Transverse colon (tissue), 4 donors: ENCODE measurements at regions of chr11 and their contacts with region 1.

Region 1: GRCh38 chr11:19679952-19680828 is 32.4 kb upstream of the NAV2 start:
- DNase-seq: peak; percentile 71
- H3K4me3 ChIP-seq: no peak overlapping the region
- H3K27ac ChIP-seq: peak overlapping the region; percentile 77 to 83 (median 80)
- H3K4me1 ChIP-seq: peaks cover 5 to 38% (median 11%) of the 10 kb centered on the region in 4 donors
- H3K27me3 ChIP-seq: no peaks in the 10 kb centered on the region
- CTCF ChIP-seq: peak in 1 of 5 experiments; percentile 22
- EP300 ChIP-seq: peak; percentile 83
- POLR2A ChIP-seq: no peak

Region 2: GRCh38 chr11:19712281-19713220 is 32.4 kb after region 1 on chr11 and contains the start of gene NAV2:
- in situ Hi-C with region 1: no loop called
- intact Hi-C with region 1: loop called (anchors 5 kb)
- DNase-seq: peak; percentile 91
- H3K4me3 ChIP-seq: peak within 1 kb of the TSS; percentile 48 to 77 (median 58)
- H3K27ac ChIP-seq: peak within 1 kb of the TSS; percentile 86 to 94 (median 90)
- H3K4me1 ChIP-seq: peaks cover 0 to 36% (median 23%) of the 10 kb centered on the region in 4 donors
- H3K27me3 ChIP-seq: peaks cover 33% of the 10 kb centered on the region
- CTCF ChIP-seq: no peak
- EP300 ChIP-seq: no peak
- POLR2A ChIP-seq: peak; percentile 69
- total RNA-seq, gene NAV2: 9.6 to 40.0 (median 23.1) TPM